ENCODE measurements at regions of chr12 and their contacts with region 1.

Region 1: DNA sequence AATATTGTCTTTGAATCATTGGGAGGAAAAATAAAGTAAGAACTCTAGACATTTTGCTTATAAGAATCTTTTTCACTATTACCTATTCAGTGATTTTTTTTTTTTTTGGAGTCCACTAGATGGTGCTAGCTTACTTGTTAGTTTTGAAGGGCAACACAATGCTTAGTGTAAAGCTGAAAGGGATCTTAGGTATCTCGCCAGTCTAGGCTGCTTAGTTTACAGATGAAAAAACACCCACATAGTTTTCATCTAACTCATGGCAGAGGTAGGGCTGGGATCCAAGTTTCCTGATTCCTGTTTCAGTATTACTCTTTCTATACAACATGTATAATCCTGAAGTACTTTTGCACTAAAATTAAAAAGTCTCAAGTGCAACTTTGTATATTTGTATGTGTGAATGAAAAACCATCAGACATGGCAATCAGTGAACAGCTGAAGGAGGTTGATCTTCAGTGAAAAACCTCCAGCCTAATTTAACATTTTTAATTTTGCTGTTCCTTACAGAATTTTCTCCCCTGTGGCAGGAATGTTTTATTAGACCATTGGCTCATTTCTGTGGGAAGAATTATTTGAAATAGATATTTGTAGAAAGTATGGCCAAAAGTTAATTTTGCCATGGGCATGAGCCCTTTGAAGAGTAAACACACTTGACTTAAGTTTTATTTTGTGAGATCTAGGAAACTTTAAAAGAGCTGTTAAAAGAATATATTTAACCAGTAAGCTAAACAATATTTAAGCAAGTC is 40.7 kb downstream of the LRRIQ1 start:
- DNase-seq: peak; percentile 57
- H3K4me3 Mint-ChIP-seq: no peak overlapping the region
- H3K27ac Mint-ChIP-seq: peak overlapping the region; percentile 77
- H3K4me1 Mint-ChIP-seq: peaks cover 9% of the 10 kb centered on the region
- H3K27me3 Mint-ChIP-seq: no peaks in the 10 kb centered on the region
- CTCF ChIP-seq: peak; percentile 30

Region 2: DNA sequence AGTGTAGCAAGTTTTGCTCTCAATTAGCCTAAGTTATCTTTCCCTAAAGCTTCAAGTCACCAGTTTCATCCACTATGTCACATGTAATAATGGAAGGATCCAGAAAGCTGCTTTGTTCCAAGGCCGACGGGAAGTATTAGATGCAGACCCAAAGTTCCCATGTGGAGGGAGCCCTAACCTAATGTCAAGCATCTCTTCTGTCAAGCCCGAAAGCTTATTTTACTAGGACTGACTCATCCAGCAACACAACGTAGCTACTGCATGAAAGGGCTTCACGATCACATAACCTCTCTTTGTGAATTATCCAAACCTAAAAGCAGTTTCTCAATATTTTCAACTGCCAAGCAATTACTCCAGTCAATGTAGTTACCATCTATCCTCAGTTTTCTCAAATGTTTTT is 297.7 kb before region 1 on chr12:
- CTCF ChIA-PET with region 1: no interaction called
- intact Hi-C with region 1: no loop called
- DNase-seq: no peak
- H3K4me3 Mint-ChIP-seq: no peak overlapping the region
- H3K27ac Mint-ChIP-seq: no peak overlapping the region
- H3K4me1 Mint-ChIP-seq: no peaks in the 10 kb centered on the region
- H3K27me3 Mint-ChIP-seq: no peaks in the 10 kb centered on the region
- CTCF ChIP-seq: no peak

Region 3: GRCh38 chr12:84874125-84874824 is 202.6 kb before region 1 on chr12:
- CTCF ChIA-PET with region 1: no interaction called
- intact Hi-C with region 1: no loop called
- DNase-seq: no peak
- H3K4me3 Mint-ChIP-seq: no peak overlapping the region
- H3K27ac Mint-ChIP-seq: no peak overlapping the region
- H3K4me1 Mint-ChIP-seq: no peaks in the 10 kb centered on the region
- H3K27me3 Mint-ChIP-seq: no peaks in the 10 kb centered on the region
- CTCF ChIP-seq: peak; percentile 36

Region 4: GRCh38 chr12:85138833-85139232 is 62.0 kb after region 1 on chr12:
- CTCF ChIA-PET with region 1: no interaction called
- intact Hi-C with region 1: loop called (anchors 5 kb)
- DNase-seq: no peak
- H3K4me3 Mint-ChIP-seq: no peak overlapping the region
- H3K27ac Mint-ChIP-seq: no peak overlapping the region
- H3K4me1 Mint-ChIP-seq: no peaks in the 10 kb centered on the region
- H3K27me3 Mint-ChIP-seq: no peaks in the 10 kb centered on the region
- CTCF ChIP-seq: no peak

Region 5: GRCh38 chr12:85280165-85280983 is 203.5 kb after region 1 on chr12 and contains the start of gene ALX1:
- CTCF ChIA-PET with region 1: interaction called, 3 read pairs
- intact Hi-C with region 1: loop called (anchors 5 kb)
- DNase-seq: peak; percentile 77
- H3K4me3 Mint-ChIP-seq: peak within 1 kb of the TSS; percentile 91
- H3K27ac Mint-ChIP-seq: peak within 1 kb of the TSS; percentile 94
- H3K4me1 Mint-ChIP-seq: no peaks in the 10 kb centered on the region
- H3K27me3 Mint-ChIP-seq: no peaks in the 10 kb centered on the region
- CTCF ChIP-seq: no peak
- total RNA-seq, gene ALX1: 2.5 and 2.9 TPM in 2 replicates

Region 6: DNA sequence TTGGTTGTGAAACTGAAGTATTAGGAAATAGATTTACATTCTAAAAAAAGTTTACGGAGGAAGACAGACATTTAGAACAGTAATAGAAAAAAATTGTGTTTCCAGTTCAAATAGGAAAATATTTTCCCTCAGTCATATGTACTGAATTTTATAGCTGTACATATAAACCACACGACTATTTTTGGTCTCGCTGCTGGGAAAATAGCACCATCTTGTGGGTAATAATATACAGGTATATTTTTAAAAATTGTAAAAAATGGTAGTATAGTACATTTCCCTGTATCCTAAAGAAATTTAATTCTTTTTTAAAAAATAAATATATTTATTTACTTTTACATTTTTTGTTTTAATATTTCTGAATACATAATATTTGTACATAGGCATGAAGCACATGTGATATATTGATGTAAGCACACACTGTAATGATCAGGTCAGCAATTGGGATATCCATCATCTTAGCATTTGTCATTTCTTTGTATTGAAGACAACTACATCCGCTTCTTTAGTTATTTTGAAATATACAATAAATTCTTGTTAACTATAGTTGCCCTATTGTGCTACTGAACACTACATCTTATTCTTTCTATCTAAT is 371.8 kb after region 1 on chr12:
- CTCF ChIA-PET with region 1: interaction called, 9 read pairs
- intact Hi-C with region 1: loop called (anchors 1 kb)
- DNase-seq: no peak
- H3K4me3 Mint-ChIP-seq: no peak overlapping the region
- H3K27ac Mint-ChIP-seq: no peak overlapping the region
- H3K4me1 Mint-ChIP-seq: peaks cover 13% of the 10 kb centered on the region
- H3K27me3 Mint-ChIP-seq: no peaks in the 10 kb centered on the region
- CTCF ChIP-seq: peak; percentile 33

Measured in Calu3 (cell line).